Natural killer cell (primary cell): ENCODE measurements at regions of chr2 and their contacts with region 1.

Region 1: DNA sequence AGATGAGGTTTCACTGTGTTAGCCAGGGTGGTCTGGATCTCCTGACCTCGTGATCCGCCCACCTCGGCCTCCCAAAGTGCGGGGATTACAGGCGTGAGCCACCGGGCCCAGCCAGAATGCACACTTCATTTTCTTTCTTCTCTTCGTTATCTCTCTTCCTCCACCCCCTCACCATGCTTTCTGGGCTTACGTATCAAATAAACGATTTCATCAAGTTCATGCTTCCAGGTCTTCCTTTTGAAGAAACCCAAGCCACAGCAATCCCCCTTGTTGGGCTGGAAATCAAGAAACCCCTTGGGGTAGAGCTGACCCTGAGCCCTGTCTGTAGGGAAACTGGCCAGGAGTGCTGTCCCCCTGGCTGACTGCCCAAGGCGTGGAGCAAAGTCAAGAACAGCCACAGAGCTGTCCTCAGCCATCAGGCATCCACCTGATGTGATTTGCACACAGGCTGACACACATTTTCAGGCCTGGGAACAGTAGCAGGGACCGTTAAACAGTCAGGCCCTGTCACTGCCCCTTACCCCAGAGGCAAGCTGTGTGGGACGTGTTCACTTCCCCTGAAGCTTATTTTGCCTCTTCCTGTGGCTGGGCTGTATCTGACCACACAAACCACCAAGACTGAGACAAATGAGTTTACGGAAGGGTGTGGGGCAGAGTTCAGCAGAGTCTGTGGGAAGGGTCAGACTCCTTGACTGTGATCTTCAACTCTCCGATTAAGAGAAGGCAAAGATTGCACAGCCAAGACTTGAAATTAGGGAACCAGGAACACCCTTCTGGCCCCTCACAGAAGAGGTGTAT is 15.1 kb upstream of the NMUR1 start:
- DNase-seq: peak; percentile 62 to 63
- ATAC-seq: peak; percentile 83 to 93 (median 92)
- H3K4me3 ChIP-seq: no peak overlapping the region
- H3K4me3 Mint-ChIP-seq: peak overlapping the region; percentile 88
- H3K27ac ChIP-seq: peak overlapping the region; percentile 84
- H3K27ac Mint-ChIP-seq: peak overlapping the region; percentile 94 to 99
- H3K4me1 ChIP-seq: peaks cover 82% of the 10 kb centered on the region
- H3K4me1 Mint-ChIP-seq: peaks cover 61 to 74% of the 10 kb centered on the region in 2 donors
- H3K27me3 ChIP-seq: no peaks in the 10 kb centered on the region
- H3K27me3 Mint-ChIP-seq: no peaks in the 10 kb centered on the region
- CTCF ChIP-seq: no peak

Region 2: GRCh38 chr2:231530091-231531011 is 15.0 kb before region 1 on chr2 and contains the start of gene NMUR1:
- intact Hi-C with region 1: loop called (anchors 2 kb)
- DNase-seq: peak; percentile 89 to 91
- ATAC-seq: peak; percentile 83 to 92 (median 83)
- H3K4me3 ChIP-seq: peak within 1 kb of the TSS; percentile 61
- H3K4me3 Mint-ChIP-seq: peak within 1 kb of the TSS; percentile 95
- H3K27ac ChIP-seq: peak within 1 kb of the TSS; percentile 81
- H3K27ac Mint-ChIP-seq: peak within 1 kb of the TSS; percentile 93 to 96
- H3K4me1 ChIP-seq: peaks cover 66% of the 10 kb centered on the region
- H3K4me1 Mint-ChIP-seq: peaks cover 73 to 81% of the 10 kb centered on the region in 2 donors
- H3K27me3 ChIP-seq: no peaks in the 10 kb centered on the region
- H3K27me3 Mint-ChIP-seq: no peaks in the 10 kb centered on the region
- CTCF ChIP-seq: peak; percentile 95
- total RNA-seq, gene NMUR1: 67.4 to 103 (median 80.2) TPM